Naive thymus-derived CD4-positive, alpha-beta T cell (primary cell): ENCODE measurements at regions of chr7 and their contacts with region 1.

Region 1: GRCh38 chr7:139791316-139791715 is 13.5 kb upstream of the HIPK2 start:
- DNase-seq: no peak
- ATAC-seq: no peak
- H3K4me3 ChIP-seq: no peak overlapping the region
- H3K4me3 Mint-ChIP-seq: no peak overlapping the region
- H3K27ac ChIP-seq: no peak overlapping the region
- H3K27ac Mint-ChIP-seq: no peak overlapping the region
- H3K4me1 ChIP-seq: no peaks in the 10 kb centered on the region
- H3K4me1 Mint-ChIP-seq: peaks cover 0 to 1% (median 0%) of the 10 kb centered on the region in 7 donors
- H3K27me3 ChIP-seq: no peaks in the 10 kb centered on the region
- H3K27me3 Mint-ChIP-seq: peaks cover 0 to 8% (median 0%) of the 10 kb centered on the region in 5 donors

Region 2: GRCh38 chr7:139842401-139843210 is 51.3 kb after region 1 on chr7:
- CTCF ChIA-PET with region 1: no interaction called
- POLR2A ChIA-PET with region 1: no interaction called
- intact Hi-C with region 1: loop called in 1 of 2 experiments (anchors 5 kb)
- DNase-seq: no peak
- ATAC-seq: no peak
- H3K4me3 ChIP-seq: no peak overlapping the region
- H3K4me3 Mint-ChIP-seq: peak overlapping the region in 1 of 10 donors; percentile 10
- H3K27ac ChIP-seq: no peak overlapping the region
- H3K27ac Mint-ChIP-seq: peak overlapping the region in 1 of 9 donors; percentile 15
- H3K4me1 ChIP-seq: no peaks in the 10 kb centered on the region
- H3K4me1 Mint-ChIP-seq: peaks cover 0 to 9% (median 0%) of the 10 kb centered on the region in 7 donors
- H3K27me3 ChIP-seq: no peaks in the 10 kb centered on the region
- H3K27me3 Mint-ChIP-seq: peaks cover 0 to 5% (median 0%) of the 10 kb centered on the region in 5 donors